Mammary epithelial cell (primary cell): ENCODE measurements at regions of chr2 and their contacts with region 1.

Region 1: GRCh38 chr2:70553584-70554337 is at the start of gene TGFA:
- DNase-seq: peak; percentile 96
- H3K4me3 ChIP-seq: peak within 1 kb of the TSS; percentile 55 to 98 (median 85)
- H3K27ac ChIP-seq: peak within 1 kb of the TSS; percentile 94
- H3K4me1 ChIP-seq: peaks cover 27% of the 10 kb centered on the region
- H3K27me3 ChIP-seq: no peaks in the 10 kb centered on the region
- CTCF ChIP-seq: peak; percentile 71 to 95
- total RNA-seq, gene TGFA: 59.2 to 126 TPM

Region 2: GRCh38 chr2:70258532-70258874 is 295.3 kb before region 1 on chr2:
- CTCF ChIA-PET with region 1: interaction called, 10 read pairs
- dilution Hi-C with region 1: no loop called
- in situ Hi-C with region 1: no loop called
- intact Hi-C with region 1: no loop called
- DNase-seq: peak; percentile 41
- H3K4me3 ChIP-seq: peak overlapping the region; percentile 46 to 93 (median 75)
- H3K27ac ChIP-seq: peak overlapping the region; percentile 9
- H3K4me1 ChIP-seq: peaks cover 9% of the 10 kb centered on the region
- H3K27me3 ChIP-seq: no peaks in the 10 kb centered on the region
- CTCF ChIP-seq: no peak

Region 3: GRCh38 chr2:70381831-70382267 is 171.9 kb before region 1 on chr2:
- CTCF ChIA-PET with region 1: no interaction called
- dilution Hi-C with region 1: no loop called
- in situ Hi-C with region 1: no loop called
- intact Hi-C with region 1: loop called (anchors 5 kb)
- DNase-seq: peak; percentile 98
- H3K4me3 ChIP-seq: no peak overlapping the region
- H3K27ac ChIP-seq: peak overlapping the region; percentile 96
- H3K4me1 ChIP-seq: peaks cover 36% of the 10 kb centered on the region
- H3K27me3 ChIP-seq: no peaks in the 10 kb centered on the region
- CTCF ChIP-seq: no peak

Region 4: GRCh38 chr2:70472221-70472890 is 81.4 kb before region 1 on chr2:
- CTCF ChIA-PET with region 1: no interaction called
- dilution Hi-C with region 1: loop called (anchors 5 kb)
- in situ Hi-C with region 1: no loop called
- intact Hi-C with region 1: no loop called
- DNase-seq: no peak
- H3K4me3 ChIP-seq: no peak overlapping the region
- H3K27ac ChIP-seq: no peak overlapping the region
- H3K4me1 ChIP-seq: no peaks in the 10 kb centered on the region
- H3K27me3 ChIP-seq: no peaks in the 10 kb centered on the region
- CTCF ChIP-seq: no peak

Region 5: DNA sequence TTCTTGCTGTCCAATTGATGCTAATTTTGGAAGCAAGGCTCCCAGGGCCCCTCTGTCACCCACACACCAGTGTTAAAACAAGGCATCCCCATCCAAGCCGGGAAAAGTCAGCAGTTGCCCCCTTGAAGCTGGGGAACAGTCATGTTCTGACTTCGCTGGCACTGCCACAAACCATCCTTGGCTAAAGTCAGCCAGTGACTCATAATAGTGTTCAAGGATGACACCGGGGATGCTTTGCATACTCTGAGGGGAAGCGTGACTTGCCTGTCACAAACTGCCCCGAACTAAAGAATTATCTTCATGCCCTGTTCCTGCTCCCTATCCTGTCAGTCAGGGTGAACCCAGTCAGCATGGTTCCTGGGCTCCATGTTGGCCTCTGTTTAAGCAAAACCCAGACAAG is 37.2 kb before region 1 on chr2:
- CTCF ChIA-PET with region 1: interaction called, 5 read pairs
- dilution Hi-C with region 1: no loop called
- in situ Hi-C with region 1: no loop called
- intact Hi-C with region 1: loop called (anchors 2 kb)
- DNase-seq: peak; percentile 48
- H3K4me3 ChIP-seq: no peak overlapping the region
- H3K27ac ChIP-seq: no peak overlapping the region
- H3K4me1 ChIP-seq: peaks cover 68% of the 10 kb centered on the region
- H3K27me3 ChIP-seq: no peaks in the 10 kb centered on the region
- CTCF ChIP-seq: no peak

Region 6: DNA sequence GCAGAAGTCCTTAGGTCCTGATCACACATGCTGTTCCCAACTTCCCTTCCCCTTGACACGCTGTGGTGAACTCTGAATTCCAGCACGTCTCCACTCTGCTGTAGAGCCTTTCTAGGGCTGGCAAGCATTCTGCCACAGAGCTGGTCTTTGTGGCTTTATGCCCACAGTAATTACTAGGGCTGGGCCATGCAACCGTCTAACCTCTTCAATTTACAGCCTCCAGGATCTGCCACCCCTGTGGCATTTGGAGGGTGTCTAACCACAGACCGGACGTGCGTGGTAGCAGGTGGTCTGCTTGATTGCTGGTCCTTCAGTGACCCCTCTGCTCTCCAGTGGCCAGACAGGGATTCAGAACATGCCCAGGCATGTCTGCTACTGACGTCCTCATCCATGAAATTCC is 43.0 kb after region 1 on chr2:
- CTCF ChIA-PET with region 1: no interaction called
- dilution Hi-C with region 1: no loop called
- in situ Hi-C with region 1: no loop called
- intact Hi-C with region 1: loop called (anchors 1 kb)
- DNase-seq: peak; percentile 85
- H3K4me3 ChIP-seq: no peak overlapping the region
- H3K27ac ChIP-seq: peak overlapping the region; percentile 92
- H3K4me1 ChIP-seq: peaks cover 24% of the 10 kb centered on the region
- H3K27me3 ChIP-seq: no peaks in the 10 kb centered on the region
- CTCF ChIP-seq: no peak

Region 7: GRCh38 chr2:70647873-70648481 is 94.2 kb after region 1 on chr2:
- CTCF ChIA-PET with region 1: interaction called, 3 read pairs
- dilution Hi-C with region 1: loop called (anchors 5 kb)
- in situ Hi-C with region 1: no loop called
- intact Hi-C with region 1: loop called (anchors 1 kb)
- DNase-seq: peak; percentile 51
- H3K4me3 ChIP-seq: no peak overlapping the region
- H3K27ac ChIP-seq: no peak overlapping the region
- H3K4me1 ChIP-seq: no peaks in the 10 kb centered on the region
- H3K27me3 ChIP-seq: no peaks in the 10 kb centered on the region
- CTCF ChIP-seq: peak; percentile 100

Region 8: GRCh38 chr2:71235930-71236587 is 682.3 kb after region 1 on chr2:
- CTCF ChIA-PET with region 1: no interaction called
- dilution Hi-C with region 1: no loop called
- in situ Hi-C with region 1: no loop called
- intact Hi-C with region 1: no loop called
- DNase-seq: no peak
- H3K4me3 ChIP-seq: no peak overlapping the region
- H3K27ac ChIP-seq: no peak overlapping the region
- H3K4me1 ChIP-seq: no peaks in the 10 kb centered on the region
- H3K27me3 ChIP-seq: peaks cover 7% of the 10 kb centered on the region
- CTCF ChIP-seq: no peak